Gastrocnemius medialis (tissue), 4 donors: ENCODE measurements at regions of chr14 and their contacts with region 1.

Region 1: GRCh38 chr14:23555882-23556699 is at the start of gene THTPA:
- DNase-seq: peak; percentile 81 to 85
- ATAC-seq: peak; percentile 90
- H3K4me3 ChIP-seq: peak within 1 kb of the TSS; percentile 86 to 98 (median 94)
- H3K27ac ChIP-seq: peak within 1 kb of the TSS; percentile 94 to 100 (median 96)
- H3K4me1 ChIP-seq: peaks cover 22 to 23% of the 10 kb centered on the region in 2 donors
- H3K27me3 ChIP-seq: no peaks in the 10 kb centered on the region
- CTCF ChIP-seq: no peak
- POLR2A ChIP-seq: peak in 1 of 2 donors; percentile 17
- total RNA-seq, gene THTPA: 13.2 to 32.9 (median 21.4) TPM

Region 2: GRCh38 chr14:22589096-22589839 is 966.8 kb before region 1 on chr14 and contains the start of gene DAD1:
- in situ Hi-C with region 1: loop called in 1 of 4 experiments (anchors 25 kb)
- intact Hi-C with region 1: no loop called
- DNase-seq: peak; percentile 97 to 98
- ATAC-seq: peak; percentile 100
- H3K4me3 ChIP-seq: peak within 1 kb of the TSS; percentile 70 to 95 (median 83)
- H3K27ac ChIP-seq: peak within 1 kb of the TSS; percentile 82 to 92 (median 87)
- H3K4me1 ChIP-seq: peaks cover 27 to 35% of the 10 kb centered on the region in 2 donors
- H3K27me3 ChIP-seq: no peaks in the 10 kb centered on the region
- CTCF ChIP-seq: peak in 1 of 5 experiments; percentile 27
- POLR2A ChIP-seq: peak; percentile 78 to 84
- total RNA-seq, gene DAD1: 155 to 257 (median 209) TPM

Region 3: DNA sequence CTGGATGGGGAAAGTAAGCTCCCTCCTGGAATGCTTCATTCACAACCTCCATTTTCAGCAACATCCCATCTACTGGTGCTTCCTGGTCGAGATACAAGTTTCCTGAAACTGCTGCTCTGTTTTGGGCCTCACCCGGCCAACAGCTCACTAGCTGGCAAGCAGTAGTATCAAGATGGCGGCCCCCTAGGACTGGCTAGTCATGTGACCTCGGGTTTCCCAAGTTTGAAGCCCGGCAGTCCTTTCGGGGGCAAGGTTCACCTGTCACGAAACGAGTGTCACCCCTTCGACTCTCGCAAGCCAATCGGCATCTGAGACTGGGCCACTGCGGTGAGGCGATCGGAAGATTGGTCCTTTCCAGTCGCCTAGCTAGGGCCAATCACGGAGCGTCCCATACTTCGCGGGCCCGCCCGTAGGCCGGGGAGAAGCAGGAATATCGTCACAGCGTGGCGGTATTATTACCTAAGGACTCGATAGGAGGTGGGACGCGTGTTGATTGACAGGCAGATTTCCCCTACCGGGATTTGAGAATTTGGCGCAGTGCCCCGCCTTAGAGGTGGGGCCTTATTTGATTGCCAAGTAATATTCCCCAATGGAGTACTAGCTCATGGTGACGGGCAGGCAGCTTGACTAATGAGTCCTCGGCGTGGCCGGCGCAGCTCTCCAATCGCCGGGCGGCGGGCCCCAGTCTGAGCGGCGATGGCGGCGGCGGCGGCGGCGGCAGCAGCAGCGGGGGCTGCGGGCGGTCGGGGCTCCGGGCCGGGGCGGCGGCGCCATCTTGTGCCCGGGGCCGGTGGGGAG is 235.1 kb before region 1 on chr14 and contains the start of gene PABPN1:
- in situ Hi-C with region 1: loop called in 3 of 4 experiments (anchors 10 to 25 kb)
- intact Hi-C with region 1: loop called (anchors 5 kb)
- DNase-seq: peak; percentile 99 to 100
- ATAC-seq: peak; percentile 92 to 96
- H3K4me3 ChIP-seq: peak within 1 kb of the TSS; percentile 90 to 100 (median 96)
- H3K27ac ChIP-seq: peak within 1 kb of the TSS; percentile 98 to 100 (median 99)
- H3K4me1 ChIP-seq: peaks cover 13 to 25% of the 10 kb centered on the region in 2 donors
- H3K27me3 ChIP-seq: no peaks in the 10 kb centered on the region
- CTCF ChIP-seq: no peak
- POLR2A ChIP-seq: peak; percentile 83 to 86
- total RNA-seq, gene PABPN1: 15.7 to 32.8 (median 26.6) TPM

Region 4: DNA sequence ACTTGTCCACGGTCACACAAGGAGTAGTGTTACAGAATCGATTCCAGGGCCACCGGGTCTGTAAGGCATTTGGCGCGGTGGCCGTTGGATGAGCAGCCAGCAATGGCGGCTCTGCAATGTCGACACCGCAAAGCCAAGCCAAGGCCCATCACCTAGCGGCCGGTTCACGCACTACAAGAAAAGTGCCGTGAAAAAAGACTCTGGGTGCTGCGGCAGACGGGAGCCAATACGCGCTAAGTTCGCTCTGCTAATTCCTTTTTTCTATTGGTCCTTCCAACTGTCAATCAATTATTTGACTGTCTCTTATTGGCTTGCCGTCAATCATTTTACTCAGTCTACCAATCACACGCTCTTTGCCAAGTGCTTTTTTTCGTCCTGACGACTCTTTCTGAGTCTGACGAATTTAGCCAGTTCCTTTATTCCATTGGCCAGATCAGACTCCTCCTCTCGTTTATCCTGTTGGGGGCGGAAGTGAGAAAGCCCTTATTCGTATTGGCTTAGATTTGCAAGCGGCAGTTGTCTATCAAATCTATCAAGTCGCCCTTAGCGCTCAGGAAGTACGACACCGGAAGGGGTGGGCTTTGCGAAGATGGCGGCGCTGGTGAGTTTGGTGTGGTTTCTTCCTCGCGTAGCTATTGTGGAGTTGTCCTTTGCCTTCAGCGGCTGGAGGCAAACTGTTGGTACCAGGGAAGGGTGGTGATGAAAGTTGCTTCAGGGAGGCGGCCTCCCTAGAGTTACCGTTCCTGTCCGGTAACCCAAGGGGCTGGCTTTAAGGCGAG is 86.8 kb before region 1 on chr14 and contains the start of gene NGDN:
- in situ Hi-C with region 1: no loop called
- intact Hi-C with region 1: loop called (anchors 2 kb)
- DNase-seq: peak; percentile 96 to 97
- ATAC-seq: peak; percentile 98 to 99
- H3K4me3 ChIP-seq: peak within 1 kb of the TSS; percentile 74 to 98 (median 88)
- H3K27ac ChIP-seq: peak within 1 kb of the TSS; percentile 82 to 89 (median 86)
- H3K4me1 ChIP-seq: peaks cover 12% of the 10 kb centered on the region in 2 donors
- H3K27me3 ChIP-seq: no peaks in the 10 kb centered on the region
- CTCF ChIP-seq: peak; percentile 88 to 97 (median 95)
- POLR2A ChIP-seq: peak; percentile 44 to 73
- total RNA-seq, gene NGDN: 27.9 to 41.9 (median 36.1) TPM

Region 5: GRCh38 chr14:23483236-23483854 is 72.7 kb before region 1 on chr14:
- in situ Hi-C with region 1: loop called in 3 of 4 experiments (anchors 5 kb)
- intact Hi-C with region 1: no loop called
- DNase-seq: no peak
- ATAC-seq: no peak
- H3K4me3 ChIP-seq: no peak overlapping the region
- H3K27ac ChIP-seq: no peak overlapping the region
- H3K4me1 ChIP-seq: no peaks in the 10 kb centered on the region
- H3K27me3 ChIP-seq: no peaks in the 10 kb centered on the region
- CTCF ChIP-seq: no peak
- POLR2A ChIP-seq: no peak

Region 6: GRCh38 chr14:23640524-23641141 is 84.5 kb after region 1 on chr14:
- in situ Hi-C with region 1: no loop called
- intact Hi-C with region 1: no loop called
- DNase-seq: peak in 1 of 2 donors; percentile 21
- ATAC-seq: peak in 1 of 2 donors; percentile 45
- H3K4me3 ChIP-seq: no peak overlapping the region
- H3K27ac ChIP-seq: no peak overlapping the region
- H3K4me1 ChIP-seq: no peaks in the 10 kb centered on the region
- H3K27me3 ChIP-seq: no peaks in the 10 kb centered on the region
- CTCF ChIP-seq: no peak
- POLR2A ChIP-seq: no peak